GM12878 (cell line): ENCODE measurements at regions of chr19 and their contacts with region 1.

Region 1: GRCh38 chr19:35716801-35717666 is 769 bp upstream of the KMT2B start:
- DNase-seq: peak; percentile 77
- ATAC-seq: peak; percentile 75
- H3K4me3 ChIP-seq: peak overlapping the region; percentile 82
- H3K27ac ChIP-seq: peak overlapping the region; percentile 95
- H3K4me1 ChIP-seq: peaks cover 32% of the 10 kb centered on the region
- H3K27me3 ChIP-seq: no peaks in the 10 kb centered on the region
- CTCF ChIP-seq: peak; percentile 53 to 76 (median 74)
- EP300 ChIP-seq: no peak
- POLR2A ChIP-seq: peak; percentile 77
- RAD21 ChIP-seq: peak; percentile 52

Region 2: DNA sequence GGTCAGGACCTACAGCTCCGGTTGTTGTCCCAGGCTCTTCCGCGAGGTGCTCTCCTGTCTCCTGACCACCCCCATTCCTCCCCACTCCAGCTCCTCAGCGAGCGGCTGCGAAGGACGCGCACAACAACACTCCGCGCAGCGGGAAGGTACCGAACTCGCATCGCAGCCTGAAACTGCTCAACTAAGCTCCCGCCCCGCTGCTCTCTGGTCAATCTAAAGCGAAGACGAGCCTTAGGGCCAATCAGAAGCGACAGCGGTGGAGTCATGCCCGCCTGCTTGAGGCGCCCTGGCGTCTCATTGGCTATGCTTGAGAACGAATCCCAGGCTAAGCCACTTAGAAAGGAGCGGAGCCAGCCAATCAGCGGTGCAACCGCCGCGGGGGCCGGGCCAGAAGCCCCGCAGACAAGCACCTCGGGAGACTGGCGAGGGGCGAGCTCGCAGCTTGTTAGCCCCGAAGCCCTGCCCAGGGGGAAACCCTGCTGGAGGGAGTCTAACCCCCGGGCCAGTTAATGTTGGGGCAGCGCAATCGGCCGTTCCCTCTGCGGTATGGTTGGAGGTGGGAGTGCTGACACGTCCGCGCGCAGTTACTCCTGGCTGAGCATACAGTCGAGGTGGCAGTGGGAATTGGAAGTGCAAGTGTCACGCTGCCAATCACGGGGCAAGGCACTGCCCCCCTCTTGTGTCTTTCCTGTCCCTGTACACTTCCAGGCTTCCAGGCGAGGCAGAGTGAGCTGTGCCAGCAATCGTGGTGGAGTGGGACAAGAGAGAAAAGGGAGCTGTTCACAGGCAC is 14.6 kb before region 1 on chr19:
- CTCF ChIA-PET with region 1: interaction called, 271 read pairs
- POLR2A ChIA-PET with region 1: interaction called, 516 read pairs
- RAD21 ChIA-PET with region 1: interaction called, 430 read pairs
- SMC1A ChIA-PET with region 1: interaction called, 375 read pairs
- in situ Hi-C with region 1: no loop called
- intact Hi-C with region 1: no loop called
- DNase-seq: peak; percentile 96
- ATAC-seq: peak; percentile 98
- H3K4me3 ChIP-seq: peak overlapping the region; percentile 80
- H3K27ac ChIP-seq: peak overlapping the region; percentile 90
- H3K4me1 ChIP-seq: peaks cover 8% of the 10 kb centered on the region
- H3K27me3 ChIP-seq: no peaks in the 10 kb centered on the region
- CTCF ChIP-seq: no peak
- EP300 ChIP-seq: no peak
- POLR2A ChIP-seq: peak; percentile 93
- RAD21 ChIP-seq: no peak

Region 3: DNA sequence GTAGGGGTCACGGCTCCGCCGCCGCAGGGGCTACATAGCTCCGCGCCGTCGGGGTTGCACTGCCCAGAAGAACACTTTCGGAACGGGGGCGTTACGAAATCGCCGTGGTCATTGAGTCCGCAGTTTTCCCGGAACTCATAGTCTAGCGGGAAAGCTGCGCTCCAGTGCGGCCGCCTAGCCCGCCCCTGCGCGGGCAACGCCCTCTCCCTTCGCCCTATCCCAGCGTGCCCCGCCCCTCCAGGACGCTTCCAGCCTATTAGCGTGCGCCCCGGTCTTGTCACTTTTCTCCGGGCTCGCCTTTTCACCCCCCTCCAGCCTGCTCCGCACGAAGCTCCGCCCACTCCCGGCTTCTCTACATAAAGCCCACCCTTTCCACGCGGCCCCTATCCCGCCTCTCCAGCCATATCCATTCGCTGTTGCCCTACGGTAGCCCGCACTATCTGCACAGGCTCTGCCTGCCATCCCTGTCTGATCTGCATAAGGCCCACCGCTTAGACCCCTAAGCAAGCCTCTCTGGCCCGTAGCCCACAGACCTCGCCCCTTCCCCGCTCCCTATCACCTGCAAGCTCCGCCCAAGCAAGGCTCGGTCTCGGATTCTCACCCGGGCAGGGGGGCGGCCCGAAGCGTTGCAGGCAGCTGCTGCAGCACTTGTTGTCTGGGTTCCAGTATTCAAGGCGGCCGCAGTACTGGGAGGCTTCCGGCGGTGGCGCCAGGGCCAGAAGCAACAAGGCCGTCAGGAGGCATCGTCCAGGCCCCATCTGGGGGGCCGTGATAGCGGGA is 23.6 kb after region 1 on chr19:
- CTCF ChIA-PET with region 1: interaction called, 16 read pairs
- POLR2A ChIA-PET with region 1: interaction called, 91 read pairs
- RAD21 ChIA-PET with region 1: interaction called, 17 read pairs
- SMC1A ChIA-PET with region 1: interaction called, 8 read pairs
- in situ Hi-C with region 1: no loop called
- intact Hi-C with region 1: loop called (anchors 1 kb)
- DNase-seq: peak; percentile 86
- ATAC-seq: peak; percentile 78
- H3K4me3 ChIP-seq: peak overlapping the region; percentile 83
- H3K27ac ChIP-seq: peak overlapping the region; percentile 99
- H3K4me1 ChIP-seq: peaks cover 26% of the 10 kb centered on the region
- H3K27me3 ChIP-seq: no peaks in the 10 kb centered on the region
- CTCF ChIP-seq: peak in 2 of 3 experiments; percentile 24 to 30; a peak in 4 of 6 replicates
- EP300 ChIP-seq: no peak
- POLR2A ChIP-seq: peak; percentile 84
- RAD21 ChIP-seq: peak; percentile 7; the same call in 1 of the 2 replicates

Region 4: GRCh38 chr19:35748106-35749020 is 31.3 kb after region 1 on chr19 and contains the start of gene LIN37:
- CTCF ChIA-PET with region 1: interaction called, 16 read pairs
- POLR2A ChIA-PET with region 1: interaction called, 91 read pairs
- RAD21 ChIA-PET with region 1: interaction called, 13 read pairs
- SMC1A ChIA-PET with region 1: interaction called, 8 read pairs
- in situ Hi-C with region 1: no loop called
- intact Hi-C with region 1: loop called (anchors 1 kb)
- DNase-seq: peak; percentile 99
- ATAC-seq: peak; percentile 85
- H3K4me3 ChIP-seq: peak within 1 kb of the TSS; percentile 81
- H3K27ac ChIP-seq: peak within 1 kb of the TSS; percentile 59
- H3K4me1 ChIP-seq: peaks cover 19% of the 10 kb centered on the region
- H3K27me3 ChIP-seq: no peaks in the 10 kb centered on the region
- CTCF ChIP-seq: no peak
- EP300 ChIP-seq: no peak
- POLR2A ChIP-seq: peak; percentile 55
- RAD21 ChIP-seq: no peak
- polyA plus RNA-seq, gene LIN37: 0.69 to 3.3 TPM

Region 5: DNA sequence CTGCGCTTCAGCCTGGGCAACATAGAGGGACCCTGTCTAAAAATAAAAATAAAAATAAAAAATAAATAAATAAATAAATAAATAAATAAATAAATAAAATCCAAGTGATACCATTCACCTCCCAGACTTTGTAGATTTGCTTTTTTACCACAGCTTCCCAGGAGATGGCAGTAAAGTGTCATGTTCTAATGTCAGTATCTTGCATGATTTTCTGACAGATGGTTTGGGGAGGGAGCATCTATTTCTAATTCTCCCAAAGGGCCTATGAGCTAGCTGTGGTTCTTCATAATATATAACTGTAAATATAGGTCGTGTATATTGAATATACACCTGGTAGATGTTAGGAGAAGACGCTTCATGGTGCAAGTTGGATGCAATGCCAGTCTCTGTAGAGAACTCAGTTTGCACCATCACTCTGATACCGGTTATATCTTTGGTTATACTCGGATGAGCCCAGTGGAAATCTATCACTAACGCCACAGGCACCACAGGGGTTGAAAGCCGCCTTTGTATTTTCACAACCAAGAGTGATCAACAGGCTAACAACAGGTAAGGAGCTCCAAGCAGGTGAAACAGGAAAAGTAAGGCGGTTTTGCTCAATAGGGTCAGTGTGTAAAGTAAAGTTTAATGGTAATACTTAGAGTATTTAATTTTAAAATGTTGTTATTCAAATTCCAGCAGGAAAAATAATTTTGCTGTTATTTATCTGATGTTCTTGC is 165.2 kb after region 1 on chr19:
- CTCF ChIA-PET with region 1: interaction called, 10 read pairs
- POLR2A ChIA-PET with region 1: no interaction called
- RAD21 ChIA-PET with region 1: interaction called, 3 read pairs
- SMC1A ChIA-PET with region 1: no interaction called
- in situ Hi-C with region 1: no loop called
- intact Hi-C with region 1: no loop called
- DNase-seq: peak; percentile 33
- ATAC-seq: peak; percentile 55
- H3K4me3 ChIP-seq: no peak overlapping the region
- H3K27ac ChIP-seq: no peak overlapping the region
- H3K4me1 ChIP-seq: no peaks in the 10 kb centered on the region
- H3K27me3 ChIP-seq: no peaks in the 10 kb centered on the region
- CTCF ChIP-seq: peak; percentile 41 to 72 (median 54); a peak in 5 of 6 replicates
- EP300 ChIP-seq: no peak
- POLR2A ChIP-seq: no peak
- RAD21 ChIP-seq: peak; percentile 95

Region 6: DNA sequence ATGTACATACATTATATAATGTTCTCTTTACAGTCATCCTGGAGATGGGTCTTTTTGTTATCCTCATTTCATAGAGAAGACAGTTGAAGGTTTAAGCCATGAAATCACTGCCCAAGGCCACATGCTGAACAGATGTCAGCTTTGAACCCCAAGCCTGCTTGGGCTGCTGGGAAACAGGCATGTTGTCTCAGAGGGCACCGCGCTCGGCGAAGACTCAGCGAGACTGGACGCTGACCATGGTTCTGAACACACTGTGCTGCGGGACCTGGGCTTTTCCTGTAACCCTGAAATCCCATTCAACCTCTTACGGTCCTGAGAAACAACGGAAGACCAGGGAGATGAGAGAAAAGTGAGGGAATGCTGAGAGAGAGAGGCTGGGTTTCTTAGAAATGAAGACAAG is 246.5 kb after region 1 on chr19:
- CTCF ChIA-PET with region 1: no interaction called
- POLR2A ChIA-PET with region 1: no interaction called
- RAD21 ChIA-PET with region 1: no interaction called
- SMC1A ChIA-PET with region 1: no interaction called
- in situ Hi-C with region 1: no loop called
- intact Hi-C with region 1: no loop called
- DNase-seq: no peak
- ATAC-seq: no peak
- H3K4me3 ChIP-seq: no peak overlapping the region
- H3K27ac ChIP-seq: no peak overlapping the region
- H3K4me1 ChIP-seq: no peaks in the 10 kb centered on the region
- H3K27me3 ChIP-seq: peaks cover 7 to 13% of the 10 kb centered on the region in 2 experiments
- CTCF ChIP-seq: no peak
- EP300 ChIP-seq: no peak
- POLR2A ChIP-seq: no peak
- RAD21 ChIP-seq: no peak